Psoas muscle (tissue), 8 donors: ENCODE measurements at regions of chr20 and their contacts with region 1.

Region 1: DNA sequence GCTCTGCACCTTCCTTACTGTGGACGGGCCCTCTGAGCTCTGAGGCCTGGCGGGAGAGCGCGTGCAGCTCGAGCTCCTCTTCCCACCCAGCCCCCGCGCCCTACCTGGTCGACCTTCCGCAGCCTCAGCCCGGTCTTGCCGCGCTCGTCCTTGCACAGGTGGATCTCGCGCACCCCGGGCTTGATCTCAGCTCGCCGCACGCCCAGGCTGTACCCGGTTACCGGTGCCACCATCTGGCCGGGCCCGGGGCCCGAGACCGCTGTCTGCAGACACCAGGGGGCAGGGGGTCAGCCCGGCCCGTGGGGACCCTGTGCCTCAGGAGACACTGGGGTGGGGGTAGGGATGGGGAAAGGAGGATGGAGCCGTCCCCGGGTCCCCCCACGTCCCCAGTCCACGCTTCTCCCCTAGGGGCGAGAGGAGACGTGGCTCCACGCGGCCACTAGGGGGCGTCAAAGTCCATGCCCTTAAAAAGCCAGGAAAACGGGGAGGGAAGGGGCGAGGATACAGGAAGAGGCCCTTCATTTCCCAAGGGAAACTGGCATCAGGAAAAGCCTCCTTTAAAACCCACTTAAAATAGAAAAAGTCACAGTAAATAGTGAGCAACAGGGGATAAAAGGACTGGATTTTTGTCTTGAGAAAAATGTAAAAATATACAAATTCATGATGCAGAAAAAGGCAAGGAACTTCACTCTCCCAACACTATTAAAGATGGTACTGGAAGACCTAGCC is 15.5 kb downstream of the SDCBP2 start:
- DNase-seq: peak; percentile 77 to 83
- ATAC-seq: peak; percentile 82 to 97 (median 90)
- H3K4me3 ChIP-seq: peak overlapping the region; percentile 41
- H3K27ac ChIP-seq: peak overlapping the region; percentile 0
- H3K4me1 ChIP-seq: no peaks in the 10 kb centered on the region
- H3K27me3 ChIP-seq: no peaks in the 10 kb centered on the region
- CTCF ChIP-seq: peak; percentile 98

Region 2: GRCh38 chr20:1437235-1437904 is 124.0 kb after region 1 on chr20:
- intact Hi-C with region 1: loop called (anchors 1 to 2 kb)
- DNase-seq: peak; percentile 67 to 87
- ATAC-seq: peak; percentile 66 to 87 (median 72)
- H3K4me3 ChIP-seq: no peak overlapping the region
- H3K27ac ChIP-seq: no peak overlapping the region
- H3K4me1 ChIP-seq: no peaks in the 10 kb centered on the region
- H3K27me3 ChIP-seq: no peaks in the 10 kb centered on the region
- CTCF ChIP-seq: peak; percentile 82

Region 3: DNA sequence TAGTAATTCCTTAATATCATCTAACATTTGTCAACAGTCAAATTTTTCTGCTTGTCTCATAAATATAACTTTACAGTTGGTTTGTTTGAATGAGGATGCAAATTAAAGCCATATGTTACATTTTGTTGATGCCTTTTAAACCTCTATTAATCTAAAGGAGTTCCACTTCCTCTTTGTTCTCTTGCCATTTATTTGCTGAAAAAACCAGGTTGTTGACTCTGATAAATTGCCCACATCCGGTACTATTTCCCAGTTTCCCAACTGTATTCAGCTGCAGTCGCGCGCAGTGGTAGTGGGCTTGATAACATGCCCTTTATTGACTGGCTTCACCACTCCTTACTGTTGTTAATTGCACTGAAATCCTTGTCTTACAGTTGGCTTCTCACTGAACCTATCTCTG is 210.6 kb after region 1 on chr20:
- intact Hi-C with region 1: no loop called
- DNase-seq: no peak
- ATAC-seq: no peak
- H3K4me3 ChIP-seq: no peak overlapping the region
- H3K27ac ChIP-seq: no peak overlapping the region
- H3K4me1 ChIP-seq: no peaks in the 10 kb centered on the region
- H3K27me3 ChIP-seq: no peaks in the 10 kb centered on the region
- CTCF ChIP-seq: no peak